BJ (cell line): ENCODE measurements at regions of chr3 and their contacts with region 1.

Region 1: DNA sequence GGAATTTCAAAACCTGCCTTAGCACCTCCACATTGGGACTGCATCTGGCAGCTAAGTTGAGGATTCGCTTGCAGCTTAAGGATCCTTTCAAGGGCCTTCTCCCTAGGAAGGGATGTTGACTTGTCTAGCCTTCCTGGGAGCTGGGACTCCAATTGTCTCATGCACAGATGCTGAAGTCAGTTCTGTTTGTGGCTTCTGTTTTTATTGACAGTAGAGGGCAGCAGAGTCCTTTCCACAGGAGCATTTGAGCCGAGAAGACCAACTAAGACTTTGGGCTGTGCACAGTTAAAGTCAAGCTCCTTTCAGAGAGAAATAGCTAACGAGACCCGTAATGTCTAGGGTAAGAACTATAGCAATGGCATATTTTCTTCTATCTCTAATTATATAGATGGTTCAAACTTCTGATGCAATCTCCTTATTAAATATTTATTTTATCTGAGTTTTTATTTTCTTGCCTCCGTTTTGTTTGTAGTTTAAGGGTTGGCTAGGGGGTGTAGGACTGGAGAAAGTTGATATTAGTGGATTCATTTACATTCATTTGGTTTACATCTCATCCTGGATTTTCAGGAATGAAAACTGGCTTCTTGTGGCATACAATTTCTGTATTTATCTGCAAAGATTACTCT is 59.7 kb upstream of the KBTBD8 start:
- DNase-seq: peak; percentile 6
- H3K4me3 ChIP-seq: no peak overlapping the region
- H3K27me3 ChIP-seq: no peaks in the 10 kb centered on the region; the same call in 1 of the 2 replicates
- CTCF ChIP-seq: peak; percentile 78

Region 2: GRCh38 chr3:66836363-66837152 is 101.9 kb before region 1 on chr3:
- CTCF ChIA-PET with region 1: no interaction called
- POLR2A ChIA-PET with region 1: no interaction called
- DNase-seq: no peak
- H3K4me3 ChIP-seq: no peak overlapping the region
- H3K27me3 ChIP-seq: no peaks in the 10 kb centered on the region
- CTCF ChIP-seq: peak; percentile 20; the same call in 1 of the 2 replicates

Region 3: GRCh38 chr3:66928252-66928651 is 10.2 kb before region 1 on chr3:
- CTCF ChIA-PET with region 1: interaction called, 11 read pairs
- POLR2A ChIA-PET with region 1: no interaction called
- DNase-seq: no peak
- H3K4me3 ChIP-seq: no peak overlapping the region
- H3K27me3 ChIP-seq: no peaks in the 10 kb centered on the region
- CTCF ChIP-seq: no peak

Region 4: DNA sequence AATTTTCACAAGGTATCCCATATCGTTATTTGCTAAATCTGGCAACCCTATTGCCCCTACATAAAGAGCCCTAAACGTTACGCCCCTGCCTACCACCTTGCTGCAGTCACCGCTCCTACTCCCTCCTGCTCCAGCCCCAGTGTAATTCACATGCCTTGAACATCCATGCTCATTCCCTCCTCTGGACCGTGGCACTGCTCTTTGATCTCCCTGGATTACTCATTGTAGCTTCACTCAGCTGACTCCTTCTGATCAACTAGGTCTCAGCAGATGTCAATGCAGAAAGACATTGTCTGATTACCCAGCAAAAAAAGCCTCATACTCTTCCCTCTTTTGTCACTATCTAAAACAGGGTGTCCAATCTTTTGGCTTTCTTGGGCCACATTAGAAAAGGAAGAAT is 18.9 kb after region 1 on chr3:
- CTCF ChIA-PET with region 1: interaction called, 21 read pairs
- POLR2A ChIA-PET with region 1: no interaction called
- DNase-seq: no peak
- H3K4me3 ChIP-seq: no peak overlapping the region
- H3K27me3 ChIP-seq: no peaks in the 10 kb centered on the region; the same call in none of the 2 replicates
- CTCF ChIP-seq: no peak